Posterior cingulate gyrus (tissue), 11 donors: ENCODE measurements at regions of chr20 and their contacts with region 1.

Region 1: DNA sequence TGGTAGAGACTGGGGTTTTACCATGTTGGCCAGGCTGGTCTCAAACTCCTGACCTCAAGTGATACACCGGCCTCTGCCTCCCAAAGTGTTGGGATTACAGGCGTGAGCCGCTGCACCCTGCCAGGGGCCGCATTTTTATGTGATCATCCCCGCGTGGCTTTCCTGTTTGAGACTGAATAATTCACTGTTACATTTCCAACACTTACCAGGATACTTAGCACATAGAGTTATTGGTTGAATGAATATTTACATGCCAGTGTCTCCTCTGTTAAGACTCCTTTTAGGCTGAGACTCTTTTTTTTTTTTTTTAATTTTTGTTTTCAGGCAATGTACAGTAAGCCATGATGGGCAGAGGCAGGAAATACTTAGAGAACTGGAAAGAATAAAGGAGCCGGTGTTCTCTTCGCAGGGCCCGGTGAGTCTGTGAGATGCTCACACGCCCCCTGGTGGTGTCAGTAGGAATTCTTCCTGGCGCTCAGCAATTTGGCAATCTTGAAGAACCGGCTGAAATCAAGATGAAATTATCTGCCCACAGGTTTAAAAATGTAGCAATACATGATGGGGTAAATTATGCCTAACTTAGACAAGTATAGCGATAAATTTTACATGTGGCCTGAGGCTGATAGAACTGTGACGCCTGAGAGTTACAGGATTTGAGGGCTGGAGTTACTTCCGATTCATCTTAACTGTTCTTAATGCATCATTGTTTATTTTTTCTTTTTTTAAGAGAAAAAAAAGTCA is 7.6 kb upstream of the RNF114 start:
- DNase-seq: peak; percentile 70 to 96 (median 86)

Region 2: DNA sequence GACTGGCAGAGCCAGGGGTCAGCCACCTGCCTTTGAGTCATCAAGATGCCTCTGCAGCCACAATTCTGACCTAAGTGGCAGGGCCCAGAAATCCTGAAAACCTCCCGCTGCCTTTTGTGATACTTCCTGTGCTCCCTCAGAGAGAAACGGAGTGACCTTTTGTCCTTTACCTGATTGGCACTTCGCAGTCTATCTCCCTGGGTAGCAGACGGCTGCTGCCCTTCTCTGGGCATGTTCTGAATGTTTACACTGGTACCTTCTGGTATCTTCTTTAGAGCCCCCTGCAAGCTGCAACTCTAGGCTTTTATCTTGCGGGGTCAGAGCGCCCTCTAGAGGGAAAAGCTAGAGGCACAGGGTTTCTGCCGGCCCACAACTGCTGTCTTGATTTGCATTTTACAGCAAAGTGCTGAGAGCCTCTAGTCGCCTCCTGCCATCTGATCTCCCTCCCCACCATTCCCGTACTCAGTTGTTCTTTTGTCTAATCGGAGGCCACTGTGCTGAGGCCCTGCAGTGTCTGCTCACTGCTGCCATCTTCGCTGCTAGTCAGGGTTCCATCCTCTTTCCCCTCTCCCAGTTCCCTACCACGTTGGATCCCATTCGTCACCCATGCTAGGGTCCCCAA is 40.1 kb before region 1 on chr20:
- intact Hi-C with region 1: loop called (anchors 1 kb)
- DNase-seq: peak; percentile 66 to 98 (median 84)

Region 3: DNA sequence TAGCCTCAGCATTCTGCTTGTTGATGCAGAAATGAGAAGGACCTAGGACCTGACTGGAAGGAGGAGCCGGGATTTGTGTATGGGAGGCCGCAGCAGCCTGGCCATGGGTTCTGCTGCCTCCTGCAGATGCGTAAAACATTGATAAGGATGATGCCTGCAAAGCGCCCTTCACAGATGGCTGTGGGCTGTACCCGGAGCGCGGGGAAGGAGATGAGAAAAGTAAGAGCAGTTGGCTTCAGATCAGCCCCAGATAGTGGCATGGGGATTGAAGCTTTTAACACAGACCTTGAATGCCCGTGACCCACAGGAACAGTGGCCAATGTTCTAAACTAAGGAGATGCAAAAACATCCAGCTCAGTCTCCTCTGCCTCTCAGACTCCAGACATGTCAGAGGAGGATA is 1230.7 kb after region 1 on chr20:
- intact Hi-C with region 1: no loop called
- DNase-seq: peak in 1 of 10 donors; percentile 76